ENCODE measurements at regions of chr22 and their contacts with region 1.

Region 1: GRCh38 chr22:37199103-37199759 is 11.2 kb upstream of the C1QTNF6 start:
- DNase-seq: peak; percentile 97
- ATAC-seq: peak; percentile 89
- H3K4me3 ChIP-seq: peak overlapping the region; percentile 69
- H3K27ac ChIP-seq: peak overlapping the region; percentile 97
- H3K4me1 ChIP-seq: peaks cover 40% of the 10 kb centered on the region
- H3K27me3 ChIP-seq: no peaks in the 10 kb centered on the region
- CTCF ChIP-seq: peak; percentile 72

Region 2: DNA sequence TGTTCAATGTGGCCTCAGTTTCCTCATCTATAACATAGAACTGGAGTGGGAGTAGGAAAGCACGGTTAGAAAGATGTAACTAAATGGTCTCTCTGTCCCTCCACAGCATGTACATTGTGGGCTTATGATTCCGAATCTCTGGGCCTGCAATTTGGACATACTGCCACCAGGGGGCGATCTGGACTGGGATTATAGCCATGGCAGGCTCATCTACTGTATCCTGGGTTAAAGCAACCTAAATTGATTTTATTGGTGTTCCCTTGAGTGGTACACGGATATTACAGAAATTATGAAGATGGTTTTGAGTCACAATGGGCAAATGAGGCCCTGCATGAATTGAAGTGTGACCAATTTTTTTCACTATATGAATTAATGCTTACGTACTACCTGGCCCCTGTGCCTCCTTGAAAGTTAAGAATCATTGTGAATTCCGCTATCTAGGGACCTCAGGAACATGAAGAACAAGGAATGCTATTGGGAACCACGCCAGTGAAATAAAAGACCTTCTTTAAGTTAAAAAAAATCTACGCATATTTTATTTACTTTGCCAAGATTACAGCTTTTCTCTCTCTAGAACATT is 212.9 kb before region 1 on chr22:
- CTCF ChIA-PET with region 1: no interaction called
- POLR2A ChIA-PET with region 1: no interaction called
- intact Hi-C with region 1: loop called (anchors 2 kb)
- DNase-seq: peak; percentile 65
- ATAC-seq: no peak
- H3K4me3 ChIP-seq: no peak overlapping the region
- H3K27ac ChIP-seq: no peak overlapping the region
- H3K4me1 ChIP-seq: no peaks in the 10 kb centered on the region
- H3K27me3 ChIP-seq: peaks cover 16% of the 10 kb centered on the region
- CTCF ChIP-seq: peak; percentile 86

Region 3: GRCh38 chr22:37077884-37078485 is 121.2 kb before region 1 on chr22:
- CTCF ChIA-PET with region 1: no interaction called
- POLR2A ChIA-PET with region 1: no interaction called
- intact Hi-C with region 1: loop called (anchors 10 kb)
- DNase-seq: peak; percentile 58
- ATAC-seq: peak; percentile 50; the same call in 1 of the 2 replicates
- H3K4me3 ChIP-seq: no peak overlapping the region
- H3K27ac ChIP-seq: no peak overlapping the region
- H3K4me1 ChIP-seq: no peaks in the 10 kb centered on the region
- H3K27me3 ChIP-seq: 0 out of 2 replicates have a peak, but pooled peaks cover 8% of the 10 kb centered on the region
- CTCF ChIP-seq: peak; percentile 87

Region 4: DNA sequence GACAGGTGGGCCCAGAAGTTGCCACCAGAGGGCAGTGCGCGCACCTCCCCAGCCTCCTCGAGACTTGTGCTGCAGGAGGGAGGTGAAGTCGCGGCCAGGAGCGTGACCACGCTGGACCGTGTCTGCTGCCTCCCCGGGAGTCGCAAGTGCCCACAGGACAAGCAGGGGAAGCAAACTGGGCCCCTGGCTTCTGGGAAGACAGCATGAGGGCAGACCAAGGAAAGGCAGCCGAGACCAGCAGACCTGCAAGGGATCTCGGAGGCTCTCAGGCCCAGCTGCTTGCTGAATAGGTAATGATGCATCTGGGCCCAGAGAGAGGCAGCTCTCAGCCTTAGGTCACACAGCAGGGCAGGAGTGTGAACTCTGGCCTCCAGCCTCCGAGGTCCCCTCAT is 32.6 kb before region 1 on chr22:
- CTCF ChIA-PET with region 1: interaction called, 3 read pairs
- POLR2A ChIA-PET with region 1: no interaction called
- intact Hi-C with region 1: loop called (anchors 1 kb)
- DNase-seq: peak; percentile 75
- ATAC-seq: peak; percentile 98
- H3K4me3 ChIP-seq: no peak overlapping the region
- H3K27ac ChIP-seq: no peak overlapping the region
- H3K4me1 ChIP-seq: peaks cover 11% of the 10 kb centered on the region
- H3K27me3 ChIP-seq: no peaks in the 10 kb centered on the region
- CTCF ChIP-seq: peak; percentile 86